Activated CD4-positive, alpha-beta memory T cell treated with anti-CD3 and anti-CD28 coated beads for 36 hours (primary cell): ENCODE measurements at regions of chr20 and their contacts with region 1.

Region 1: GRCh38 chr20:41136680-41137613 is at the start of gene PLCG1:
- DNase-seq: peak; percentile 89
- H3K4me3 Mint-ChIP-seq: peak within 1 kb of the TSS; percentile 94
- H3K27ac Mint-ChIP-seq: peak within 1 kb of the TSS; percentile 92
- H3K4me1 Mint-ChIP-seq: peaks cover 64% of the 10 kb centered on the region
- H3K27me3 Mint-ChIP-seq: no peaks in the 10 kb centered on the region
- total RNA-seq, gene PLCG1: 133 to 139 TPM

Region 2: GRCh38 chr20:40962730-40963504 is 174.0 kb before region 1 on chr20:
- CTCF ChIA-PET with region 1: interaction called, 19 read pairs
- POLR2A ChIA-PET with region 1: no interaction called
- intact Hi-C with region 1: no loop called
- DNase-seq: peak; percentile 82
- H3K4me3 Mint-ChIP-seq: no peak overlapping the region
- H3K27ac Mint-ChIP-seq: no peak overlapping the region
- H3K4me1 Mint-ChIP-seq: peaks cover 9% of the 10 kb centered on the region
- H3K27me3 Mint-ChIP-seq: no peaks in the 10 kb centered on the region

Region 3: GRCh38 chr20:41095110-41095969 is 41.6 kb before region 1 on chr20:
- CTCF ChIA-PET with region 1: interaction called, 11 read pairs
- POLR2A ChIA-PET with region 1: no interaction called
- intact Hi-C with region 1: no loop called
- DNase-seq: peak; percentile 71
- H3K4me3 Mint-ChIP-seq: no peak overlapping the region
- H3K27ac Mint-ChIP-seq: peak overlapping the region; percentile 90
- H3K4me1 Mint-ChIP-seq: peaks cover 22% of the 10 kb centered on the region
- H3K27me3 Mint-ChIP-seq: no peaks in the 10 kb centered on the region

Region 4: GRCh38 chr20:41149679-41150131 is 12.8 kb after region 1 on chr20:
- CTCF ChIA-PET with region 1: interaction called, 73 read pairs
- POLR2A ChIA-PET with region 1: interaction called, 85 read pairs
- intact Hi-C with region 1: no loop called
- DNase-seq: peak; percentile 53
- H3K4me3 Mint-ChIP-seq: no peak overlapping the region
- H3K27ac Mint-ChIP-seq: peak overlapping the region; percentile 57
- H3K4me1 Mint-ChIP-seq: peaks cover 94% of the 10 kb centered on the region
- H3K27me3 Mint-ChIP-seq: no peaks in the 10 kb centered on the region

Region 5: DNA sequence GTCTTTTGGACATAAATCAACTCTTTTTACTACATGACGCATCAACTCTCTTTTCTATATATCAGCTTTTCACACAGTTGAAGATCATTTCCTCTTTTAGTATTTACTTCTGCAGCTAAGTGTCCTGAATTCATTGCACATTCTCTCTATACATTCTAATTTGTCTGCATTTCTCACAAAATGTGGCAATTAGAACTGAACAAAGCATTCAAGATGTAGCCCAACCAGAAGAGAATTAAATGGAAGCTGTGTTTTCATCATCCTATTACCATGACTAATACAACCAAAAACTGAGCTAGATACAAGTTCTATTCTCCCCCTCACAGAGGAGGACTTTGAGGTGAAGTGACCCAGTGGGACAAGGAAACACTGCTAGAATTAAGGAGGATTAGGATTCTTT is 87.3 kb after region 1 on chr20:
- CTCF ChIA-PET with region 1: interaction called, 69 read pairs
- POLR2A ChIA-PET with region 1: no interaction called
- intact Hi-C with region 1: no loop called
- DNase-seq: no peak
- H3K4me3 Mint-ChIP-seq: no peak overlapping the region
- H3K27ac Mint-ChIP-seq: no peak overlapping the region
- H3K4me1 Mint-ChIP-seq: peaks cover 4% of the 10 kb centered on the region
- H3K27me3 Mint-ChIP-seq: no peaks in the 10 kb centered on the region

Region 6: DNA sequence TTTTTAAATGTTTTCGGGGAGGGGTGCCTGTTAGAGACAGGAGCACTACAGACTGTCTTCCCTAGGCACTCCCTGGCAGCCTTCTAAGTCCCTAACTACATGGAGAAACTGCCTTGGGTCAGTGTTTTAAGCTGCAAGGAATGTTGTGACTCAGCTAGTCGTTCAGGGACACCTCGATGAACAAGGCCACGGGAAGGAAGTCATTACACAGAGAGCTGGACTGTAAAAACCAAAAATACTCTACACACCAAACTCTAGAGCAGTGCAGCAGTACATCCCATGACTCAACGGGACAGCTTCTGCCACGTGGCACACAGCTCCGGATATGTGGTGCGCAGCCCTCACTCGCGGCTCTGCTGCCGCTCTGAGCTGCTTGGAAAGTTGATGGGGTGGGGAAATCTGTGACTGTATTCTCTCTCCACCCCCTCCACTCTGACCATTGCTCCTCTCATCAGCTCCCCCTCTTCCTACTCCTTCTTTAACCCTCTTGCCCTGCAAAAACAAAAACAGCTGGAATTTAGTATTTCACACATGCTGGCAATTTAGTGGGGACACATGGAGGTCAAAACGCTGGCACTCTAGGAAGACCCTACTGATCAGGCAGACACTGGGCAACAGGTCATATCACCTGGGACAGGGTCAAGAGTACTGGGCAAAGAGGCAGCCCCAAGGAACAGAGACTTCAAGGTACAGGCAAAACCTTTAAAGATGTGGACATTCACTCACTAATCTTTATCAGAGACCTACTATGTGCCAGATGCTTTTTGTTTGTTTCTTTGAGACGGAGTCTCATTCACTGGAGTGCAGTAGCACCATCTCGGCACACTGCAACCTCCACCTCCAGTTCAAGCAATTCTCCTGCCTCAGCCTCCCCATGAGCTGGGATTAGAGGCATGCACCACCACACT is 192.7 kb after region 1 on chr20:
- CTCF ChIA-PET with region 1: interaction called, 12 read pairs
- POLR2A ChIA-PET with region 1: no interaction called
- intact Hi-C with region 1: no loop called
- DNase-seq: peak; percentile 81
- H3K4me3 Mint-ChIP-seq: no peak overlapping the region
- H3K27ac Mint-ChIP-seq: peak overlapping the region; percentile 61
- H3K4me1 Mint-ChIP-seq: peaks cover 11% of the 10 kb centered on the region
- H3K27me3 Mint-ChIP-seq: no peaks in the 10 kb centered on the region

Region 7: DNA sequence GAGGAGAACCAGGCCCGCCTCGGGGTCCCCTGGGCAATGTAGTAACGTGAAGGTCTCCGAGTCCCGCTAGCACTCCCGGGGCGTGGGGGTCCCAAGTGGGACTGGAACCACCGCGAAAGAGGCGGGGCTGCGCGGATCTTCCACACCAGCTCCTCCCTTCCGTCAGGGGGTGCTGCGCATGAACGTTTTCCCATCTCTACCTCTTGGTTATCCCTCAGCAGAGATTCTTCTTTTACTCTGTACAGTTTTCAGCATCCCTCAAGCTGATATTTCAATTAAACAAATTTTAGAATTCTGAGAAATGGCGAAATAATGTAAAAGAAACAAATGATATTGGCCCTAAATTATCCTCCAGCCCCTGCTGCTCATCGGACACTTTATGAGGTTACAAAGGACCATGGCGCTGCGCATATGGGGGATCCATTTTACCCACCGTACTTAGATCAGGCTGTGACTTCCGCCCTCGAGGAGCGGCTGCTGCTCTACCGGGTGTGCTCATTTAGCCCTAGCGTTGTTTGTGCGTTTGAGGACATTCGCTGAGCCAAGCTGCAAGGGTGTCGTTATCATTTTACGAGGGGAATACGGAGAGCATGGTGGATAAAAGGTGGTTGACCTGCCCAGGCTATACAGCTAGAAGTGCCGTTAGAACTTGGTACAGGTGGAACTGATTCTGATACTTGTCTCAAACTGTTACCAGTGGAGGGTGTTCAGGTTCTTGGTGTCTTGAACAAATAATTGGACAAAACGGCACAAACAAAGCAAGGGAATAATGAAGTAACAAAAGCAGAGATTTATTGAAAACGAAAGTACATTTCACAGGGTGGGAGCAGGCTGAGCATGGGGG is 556.4 kb after region 1 on chr20:
- CTCF ChIA-PET with region 1: no interaction called
- POLR2A ChIA-PET with region 1: no interaction called
- intact Hi-C with region 1: loop called (anchors 2 kb)
- DNase-seq: peak; percentile 87
- H3K4me3 Mint-ChIP-seq: peak overlapping the region; percentile 90
- H3K27ac Mint-ChIP-seq: peak overlapping the region; percentile 92
- H3K4me1 Mint-ChIP-seq: peaks cover 18% of the 10 kb centered on the region
- H3K27me3 Mint-ChIP-seq: peaks cover 2% of the 10 kb centered on the region